ENCODE measurements at regions of chr16 and their contacts with region 1.

Region 1: GRCh38 chr16:29815793-29816693 is at the start of gene PAGR1:
- DNase-seq: peak; percentile 95
- H3K27ac ChIP-seq: peak within 1 kb of the TSS; percentile 99
- CTCF ChIP-seq: peak; percentile 92

Region 2: GRCh38 chr16:29805378-29806098 is 10.5 kb before region 1 on chr16:
- CTCF ChIA-PET with region 1: interaction called, 6 read pairs
- POLR2A ChIA-PET with region 1: interaction called, 10 read pairs
- DNase-seq: peak; percentile 87
- H3K27ac ChIP-seq: peak overlapping the region; percentile 99
- CTCF ChIP-seq: no peak

Region 3: DNA sequence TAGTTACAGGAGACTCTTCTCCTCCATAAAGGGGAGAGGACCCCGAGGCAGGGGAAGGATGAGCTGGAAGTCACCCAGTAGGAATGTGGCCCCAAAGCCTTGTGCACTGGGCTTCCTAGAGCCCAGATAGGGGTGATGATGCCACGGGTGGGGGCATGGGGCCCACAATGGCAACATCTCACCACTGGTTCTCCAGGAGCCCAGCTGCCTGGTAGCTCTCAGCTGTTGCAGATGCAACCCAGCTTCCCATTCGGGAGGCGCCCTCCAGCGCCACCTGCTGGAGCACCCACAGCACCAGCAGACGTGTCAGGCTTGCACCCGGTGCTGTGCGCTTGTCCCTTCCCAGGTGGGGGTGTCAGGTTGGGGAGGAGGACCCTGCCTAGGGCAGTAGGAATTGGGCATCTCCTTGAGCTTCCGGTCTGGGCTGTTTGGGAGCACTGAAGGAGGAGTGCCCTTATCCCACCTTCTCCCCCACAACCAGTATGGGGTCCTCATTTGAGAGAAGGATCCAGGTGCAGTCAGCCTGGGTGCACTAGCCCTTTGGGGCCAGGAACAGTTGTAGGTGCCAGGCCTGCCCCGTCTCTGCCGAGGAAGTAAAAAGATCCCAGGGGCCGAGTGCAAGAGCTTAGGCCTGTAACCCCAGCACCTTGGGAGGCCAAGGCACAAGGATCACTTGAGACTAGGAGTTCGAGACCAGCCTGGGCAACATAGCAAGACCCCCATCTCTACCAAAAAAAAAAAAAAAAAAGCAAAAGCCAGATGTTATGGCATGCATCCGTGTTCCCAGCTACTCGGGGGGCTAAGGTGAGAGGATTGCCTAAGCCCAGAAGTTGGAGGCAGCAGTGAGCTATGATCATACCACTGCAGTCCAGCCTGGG is 32.6 kb after region 1 on chr16:
- CTCF ChIA-PET with region 1: interaction called, 15 read pairs
- POLR2A ChIA-PET with region 1: no interaction called
- DNase-seq: peak; percentile 44
- H3K27ac ChIP-seq: peak overlapping the region; percentile 20; the same call in 1 of the 2 replicates
- CTCF ChIP-seq: peak; percentile 78

Region 4: DNA sequence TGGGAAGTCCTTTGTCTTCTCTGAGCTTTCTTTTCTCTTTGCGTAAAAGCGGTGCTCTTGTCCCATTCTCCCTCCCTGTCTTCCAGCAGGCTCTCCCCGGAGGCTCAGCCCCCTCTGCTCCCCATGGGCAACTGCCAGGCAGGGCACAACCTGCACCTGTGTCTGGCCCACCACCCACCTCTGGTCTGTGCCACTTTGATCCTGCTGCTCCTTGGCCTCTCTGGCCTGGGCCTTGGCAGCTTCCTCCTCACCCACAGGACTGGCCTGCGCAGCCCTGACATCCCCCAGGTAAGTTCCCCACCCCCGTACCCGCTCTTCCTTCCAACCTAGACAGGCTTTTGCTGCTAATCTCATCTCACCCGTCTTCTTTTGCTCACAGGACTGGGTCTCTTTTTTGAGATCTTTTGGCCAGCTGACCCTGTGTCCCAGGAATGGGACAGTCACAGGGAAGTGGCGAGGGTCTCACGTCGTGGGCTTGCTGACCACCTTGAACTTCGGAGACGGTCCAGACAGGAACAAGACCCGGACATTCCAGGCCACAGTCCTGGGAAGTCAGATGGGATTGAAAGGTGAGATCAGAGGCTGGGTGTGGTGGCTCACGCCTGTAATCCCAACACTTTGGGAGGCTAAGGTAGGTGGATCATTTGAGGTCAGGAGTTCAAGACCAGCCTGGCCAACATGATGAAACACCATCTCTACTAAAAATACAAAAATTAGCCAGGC is 147.1 kb after region 1 on chr16:
- CTCF ChIA-PET with region 1: no interaction called
- POLR2A ChIA-PET with region 1: interaction called, 13 read pairs
- DNase-seq: no peak
- H3K27ac ChIP-seq: peak overlapping the region; percentile 89
- CTCF ChIP-seq: no peak

Measured in RWPE1 (cell line).